Activated CD4-positive, alpha-beta T cell treated with anti-CD3 and anti-CD28 coated beads for 36 hours (primary cell): ENCODE measurements at regions of chr5 and their contacts with region 1.

Region 1: GRCh38 chr5:137743031-137743640 is 7.2 kb upstream of the KLHL3 start:
- DNase-seq: peak; percentile 75
- ATAC-seq: peak; percentile 91
- H3K4me3 Mint-ChIP-seq: no peak overlapping the region
- H3K27ac Mint-ChIP-seq: no peak overlapping the region
- H3K4me1 Mint-ChIP-seq: peaks cover 16% of the 10 kb centered on the region
- H3K27me3 Mint-ChIP-seq: no peaks in the 10 kb centered on the region

Region 2: GRCh38 chr5:136174021-136174659 is 1569.0 kb before region 1 on chr5:
- CTCF ChIA-PET with region 1: no interaction called
- POLR2A ChIA-PET with region 1: no interaction called
- intact Hi-C with region 1: no loop called
- DNase-seq: no peak
- ATAC-seq: no peak
- H3K4me3 Mint-ChIP-seq: no peak overlapping the region
- H3K27ac Mint-ChIP-seq: no peak overlapping the region
- H3K4me1 Mint-ChIP-seq: no peaks in the 10 kb centered on the region
- H3K27me3 Mint-ChIP-seq: peaks cover 2% of the 10 kb centered on the region

Region 3: GRCh38 chr5:137635521-137635921 is 107.6 kb before region 1 on chr5:
- CTCF ChIA-PET with region 1: interaction called, 142 read pairs
- POLR2A ChIA-PET with region 1: no interaction called
- intact Hi-C with region 1: no loop called
- DNase-seq: no peak
- ATAC-seq: no peak
- H3K4me3 Mint-ChIP-seq: no peak overlapping the region
- H3K27ac Mint-ChIP-seq: no peak overlapping the region
- H3K4me1 Mint-ChIP-seq: no peaks in the 10 kb centered on the region
- H3K27me3 Mint-ChIP-seq: no peaks in the 10 kb centered on the region

Region 4: GRCh38 chr5:137641148-137641547 is 102.0 kb before region 1 on chr5:
- CTCF ChIA-PET with region 1: interaction called, 21 read pairs
- POLR2A ChIA-PET with region 1: no interaction called
- intact Hi-C with region 1: no loop called
- DNase-seq: no peak
- ATAC-seq: no peak
- H3K4me3 Mint-ChIP-seq: no peak overlapping the region
- H3K27ac Mint-ChIP-seq: no peak overlapping the region
- H3K4me1 Mint-ChIP-seq: no peaks in the 10 kb centered on the region
- H3K27me3 Mint-ChIP-seq: no peaks in the 10 kb centered on the region

Region 5: GRCh38 chr5:137665678-137666460 is 77.3 kb before region 1 on chr5:
- CTCF ChIA-PET with region 1: interaction called, 290 read pairs
- POLR2A ChIA-PET with region 1: no interaction called
- intact Hi-C with region 1: no loop called
- DNase-seq: peak; percentile 65
- ATAC-seq: peak; percentile 100
- H3K4me3 Mint-ChIP-seq: no peak overlapping the region
- H3K27ac Mint-ChIP-seq: peak overlapping the region; percentile 64
- H3K4me1 Mint-ChIP-seq: peaks cover 31% of the 10 kb centered on the region
- H3K27me3 Mint-ChIP-seq: no peaks in the 10 kb centered on the region

Region 6: DNA sequence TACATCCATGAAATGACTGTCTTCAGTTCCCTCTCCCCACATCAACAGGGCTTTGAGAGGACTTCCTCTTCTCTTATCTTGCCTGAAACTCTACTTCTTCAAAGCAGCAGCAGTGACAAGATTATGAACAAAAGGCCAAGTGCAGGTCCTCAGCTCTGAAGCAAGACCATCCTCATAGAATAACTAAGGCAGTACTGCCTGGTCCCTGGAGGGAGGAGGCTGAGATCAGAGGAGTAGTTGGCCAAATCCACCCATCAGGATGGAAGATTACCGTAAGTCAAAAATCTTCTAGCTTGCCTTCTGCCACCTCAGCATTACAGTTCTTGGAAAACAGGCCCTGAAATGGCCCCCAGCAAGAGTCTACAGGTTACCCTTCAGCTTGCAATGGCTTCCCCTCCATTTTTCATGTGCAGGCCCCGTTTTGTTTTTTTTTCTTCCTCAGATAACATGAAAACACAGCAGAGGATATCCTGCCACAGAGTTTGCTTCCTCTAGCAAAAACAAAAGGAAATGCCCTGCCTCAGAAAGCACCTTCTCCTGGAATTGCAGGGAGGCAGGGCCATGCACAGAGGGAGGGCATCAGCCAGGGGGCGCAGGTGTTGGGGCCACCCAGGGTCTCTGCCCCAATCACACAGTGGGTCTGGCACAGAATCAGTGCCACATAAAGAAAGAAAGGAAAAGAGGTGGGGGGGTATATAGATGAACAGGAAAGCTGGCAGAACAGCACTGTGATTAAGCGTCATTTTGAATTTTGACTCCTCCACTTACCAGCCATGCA is 47.3 kb before region 1 on chr5:
- CTCF ChIA-PET with region 1: interaction called, 30 read pairs
- POLR2A ChIA-PET with region 1: interaction called, 5 read pairs
- intact Hi-C with region 1: no loop called
- DNase-seq: peak; percentile 42
- ATAC-seq: peak; percentile 75
- H3K4me3 Mint-ChIP-seq: peak overlapping the region; percentile 40
- H3K27ac Mint-ChIP-seq: peak overlapping the region; percentile 89
- H3K4me1 Mint-ChIP-seq: peaks cover 51% of the 10 kb centered on the region
- H3K27me3 Mint-ChIP-seq: no peaks in the 10 kb centered on the region

Region 7: GRCh38 chr5:137730336-137730735 is 12.8 kb before region 1 on chr5:
- CTCF ChIA-PET with region 1: interaction called, 11 read pairs
- POLR2A ChIA-PET with region 1: no interaction called
- intact Hi-C with region 1: no loop called
- DNase-seq: no peak
- ATAC-seq: no peak
- H3K4me3 Mint-ChIP-seq: no peak overlapping the region
- H3K27ac Mint-ChIP-seq: no peak overlapping the region
- H3K4me1 Mint-ChIP-seq: peaks cover 9% of the 10 kb centered on the region
- H3K27me3 Mint-ChIP-seq: no peaks in the 10 kb centered on the region

Region 8: GRCh38 chr5:138459311-138459933 is 716.3 kb after region 1 on chr5:
- CTCF ChIA-PET with region 1: no interaction called
- POLR2A ChIA-PET with region 1: no interaction called
- intact Hi-C with region 1: no loop called
- DNase-seq: peak; percentile 94
- ATAC-seq: peak; percentile 74
- H3K4me3 Mint-ChIP-seq: peak overlapping the region; percentile 53
- H3K27ac Mint-ChIP-seq: peak overlapping the region; percentile 98
- H3K4me1 Mint-ChIP-seq: peaks cover 47% of the 10 kb centered on the region
- H3K27me3 Mint-ChIP-seq: no peaks in the 10 kb centered on the region